Activated T-helper 1 cell treated with anti-CD3 and anti-CD28 coated beads, Interleukin-12 subunit alpha, Interleukin-12 subunit beta, Interleukin-2, Interleukin-4 antibody, amounts not matched to agents 30 ng/mL and 10 ng/mL and 1 ng/mL, durations not matched to agents 14 hours and 24 hours and 36 hours (primary cell): ENCODE measurements at regions of chr1 and their contacts with region 1.

Region 1: GRCh38 chr1:153572569-153573015 is 6.9 kb upstream of the S100A2 start:
- DNase-seq: peak; percentile 20
- H3K4me3 Mint-ChIP-seq: no peak overlapping the region
- H3K27ac Mint-ChIP-seq: peak overlapping the region; percentile 27
- H3K4me1 Mint-ChIP-seq: peaks cover 33% of the 10 kb centered on the region
- H3K27me3 Mint-ChIP-seq: peaks cover 11% of the 10 kb centered on the region

Region 2: DNA sequence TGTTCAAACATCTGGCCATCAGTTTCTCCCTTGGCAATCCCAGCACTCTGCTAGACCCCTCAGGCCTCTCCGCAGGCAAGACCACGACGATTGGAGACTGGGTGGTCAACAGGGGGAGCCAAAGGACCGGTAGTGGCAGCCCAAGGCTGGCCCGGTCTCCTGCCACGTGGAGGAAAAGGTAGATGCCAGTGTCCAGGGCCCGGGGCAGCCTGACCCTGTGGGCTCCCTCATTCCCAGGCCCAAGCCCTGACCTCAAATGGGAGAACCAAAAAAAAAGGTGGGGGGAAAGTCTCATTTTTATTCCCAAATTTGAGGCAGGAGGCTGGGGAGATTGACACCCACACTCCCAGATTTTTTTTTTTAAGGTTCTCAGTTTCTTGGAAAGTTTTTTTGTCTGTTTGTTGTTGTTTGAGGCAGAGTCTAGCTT is 61.6 kb before region 1 on chr1:
- intact Hi-C with region 1: loop called (anchors 1 kb)
- DNase-seq: peak; percentile 65
- H3K4me3 Mint-ChIP-seq: no peak overlapping the region
- H3K27ac Mint-ChIP-seq: peak overlapping the region; percentile 55
- H3K4me1 Mint-ChIP-seq: peaks cover 21% of the 10 kb centered on the region
- H3K27me3 Mint-ChIP-seq: peaks cover 2% of the 10 kb centered on the region

Region 3: DNA sequence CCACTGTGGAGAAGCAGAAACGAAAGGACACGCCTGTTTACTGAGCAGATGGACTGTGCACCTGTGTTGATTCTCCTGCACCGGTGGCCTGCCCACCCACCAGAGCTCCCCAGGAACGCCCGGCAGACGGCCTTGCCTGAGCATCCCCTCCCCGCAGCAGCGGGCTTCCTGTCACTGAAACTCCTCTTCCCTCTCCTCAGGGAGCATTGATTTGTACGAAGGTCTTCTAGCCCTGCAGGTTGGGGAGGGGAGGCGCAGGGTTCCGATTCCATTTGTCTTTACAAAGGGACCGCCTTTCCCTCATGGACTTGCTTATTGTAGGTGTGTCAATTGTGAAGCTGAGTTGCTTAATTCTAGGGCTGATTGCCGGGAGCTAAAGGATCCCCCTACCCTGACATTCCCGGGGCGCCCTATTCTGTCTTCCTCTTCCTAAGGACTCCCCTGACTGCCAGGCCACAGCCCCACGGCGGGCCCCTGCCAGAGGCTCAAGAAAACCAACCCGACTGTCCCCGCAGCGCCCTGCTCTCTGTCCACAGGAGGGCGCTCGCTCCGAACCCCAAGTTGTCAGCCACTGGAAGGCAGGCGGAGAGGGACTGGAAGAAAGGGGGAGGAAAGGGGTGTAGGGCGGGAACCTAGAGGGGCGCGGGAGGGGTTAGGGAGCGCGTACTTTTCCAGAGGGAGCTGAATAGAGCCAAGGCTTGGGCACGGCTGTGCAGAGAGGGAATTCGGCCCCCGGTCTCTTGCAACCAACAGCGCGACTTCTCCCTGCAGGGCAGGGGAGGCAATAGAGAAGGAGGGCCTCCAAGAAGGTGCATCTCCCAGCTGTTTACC is 39.6 kb before region 1 on chr1:
- intact Hi-C with region 1: loop called (anchors 1 kb)
- DNase-seq: peak; percentile 72
- H3K4me3 Mint-ChIP-seq: peak overlapping the region; percentile 91
- H3K27ac Mint-ChIP-seq: peak overlapping the region; percentile 83
- H3K4me1 Mint-ChIP-seq: peaks cover 62% of the 10 kb centered on the region
- H3K27me3 Mint-ChIP-seq: no peaks in the 10 kb centered on the region

Region 4: GRCh38 chr1:153597206-153597605 is 24.6 kb after region 1 on chr1:
- intact Hi-C with region 1: loop called (anchors 1 kb)
- DNase-seq: no peak
- H3K4me3 Mint-ChIP-seq: no peak overlapping the region
- H3K27ac Mint-ChIP-seq: no peak overlapping the region
- H3K4me1 Mint-ChIP-seq: peaks cover 9% of the 10 kb centered on the region
- H3K27me3 Mint-ChIP-seq: peaks cover 2% of the 10 kb centered on the region

Region 5: GRCh38 chr1:153617675-153618074 is 45.1 kb after region 1 on chr1:
- intact Hi-C with region 1: loop called (anchors 1 kb)
- DNase-seq: peak; percentile 63
- H3K4me3 Mint-ChIP-seq: no peak overlapping the region
- H3K27ac Mint-ChIP-seq: no peak overlapping the region
- H3K4me1 Mint-ChIP-seq: peaks cover 8% of the 10 kb centered on the region
- H3K27me3 Mint-ChIP-seq: no peaks in the 10 kb centered on the region

Region 6: DNA sequence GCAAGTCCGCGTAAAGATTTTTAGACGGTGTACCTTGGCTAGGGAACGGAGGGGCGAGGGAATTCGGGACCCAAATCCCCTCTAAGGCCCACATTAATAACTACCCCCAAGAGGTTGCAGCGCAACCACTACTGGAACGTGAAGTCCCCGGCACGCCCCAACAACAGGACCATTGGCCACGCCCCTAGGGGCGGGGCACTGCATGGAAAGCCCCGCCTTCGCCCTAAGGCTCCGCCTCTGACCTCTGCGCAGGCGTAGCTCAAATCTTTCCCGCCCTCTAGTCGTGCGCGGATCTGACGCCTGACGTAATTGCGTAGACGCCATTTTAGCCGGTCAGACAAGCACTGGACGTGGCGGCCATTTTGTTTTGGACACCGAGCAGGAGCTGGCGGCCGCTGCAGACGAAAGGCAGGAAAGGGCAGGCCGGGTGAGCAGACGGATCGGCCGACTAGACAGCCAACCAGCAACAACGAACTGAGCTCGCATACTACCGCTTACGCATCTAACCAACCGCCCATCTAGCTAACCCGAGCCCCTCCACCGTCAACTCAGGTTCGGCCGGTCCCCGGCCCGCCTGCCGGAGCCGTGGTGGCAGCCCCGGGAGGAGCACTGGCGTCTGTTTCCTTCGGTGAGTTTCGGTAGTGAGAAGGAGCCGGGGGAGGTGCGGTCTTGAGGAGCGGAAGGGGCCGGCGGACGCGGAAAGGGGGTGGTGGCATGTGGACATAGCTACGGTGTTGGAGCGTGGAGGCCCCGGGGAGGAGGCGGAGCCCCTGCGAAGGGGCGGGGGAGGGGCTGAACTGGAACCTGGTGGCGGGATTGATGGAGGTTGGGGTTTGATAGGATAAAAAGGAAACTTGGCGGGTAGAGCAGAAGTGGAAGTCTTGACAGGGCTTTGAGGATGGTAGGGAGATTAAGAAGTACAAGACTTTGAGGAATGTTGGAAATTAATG is 61.4 kb after region 1 on chr1 and contains the start of gene CHTOP:
- intact Hi-C with region 1: loop called (anchors 5 kb)
- DNase-seq: peak; percentile 96
- H3K4me3 Mint-ChIP-seq: peak within 1 kb of the TSS; percentile 97
- H3K27ac Mint-ChIP-seq: peak within 1 kb of the TSS; percentile 100
- H3K4me1 Mint-ChIP-seq: peaks cover 45% of the 10 kb centered on the region
- H3K27me3 Mint-ChIP-seq: no peaks in the 10 kb centered on the region
- total RNA-seq, gene CHTOP: 101 and 105 TPM in 2 replicates

Region 7: GRCh38 chr1:153749408-153750005 is 176.9 kb after region 1 on chr1:
- intact Hi-C with region 1: loop called (anchors 5 kb)
- DNase-seq: peak; percentile 75
- H3K4me3 Mint-ChIP-seq: no peak overlapping the region
- H3K27ac Mint-ChIP-seq: no peak overlapping the region
- H3K4me1 Mint-ChIP-seq: peaks cover 7% of the 10 kb centered on the region
- H3K27me3 Mint-ChIP-seq: no peaks in the 10 kb centered on the region

Region 8: GRCh38 chr1:154006136-154006535 is 433.5 kb after region 1 on chr1:
- intact Hi-C with region 1: no loop called
- DNase-seq: no peak
- H3K4me3 Mint-ChIP-seq: no peak overlapping the region
- H3K27ac Mint-ChIP-seq: no peak overlapping the region
- H3K4me1 Mint-ChIP-seq: no peaks in the 10 kb centered on the region
- H3K27me3 Mint-ChIP-seq: peaks cover 2% of the 10 kb centered on the region

Region 9: GRCh38 chr1:154104433-154105082 is 532.0 kb after region 1 on chr1:
- intact Hi-C with region 1: no loop called
- DNase-seq: no peak
- H3K4me3 Mint-ChIP-seq: no peak overlapping the region
- H3K27ac Mint-ChIP-seq: no peak overlapping the region
- H3K4me1 Mint-ChIP-seq: no peaks in the 10 kb centered on the region
- H3K27me3 Mint-ChIP-seq: peaks cover 3% of the 10 kb centered on the region